CD8-positive, alpha-beta T cell (primary cell): ENCODE measurements at regions of chr3 and their contacts with region 1.

Region 1: GRCh38 chr3:50674349-50675178 is at the start of gene DOCK3:
- DNase-seq: peak; percentile 29 to 87 (median 60)
- ATAC-seq: peak; percentile 86
- H3K4me3 ChIP-seq: peak within 1 kb of the TSS; percentile 54 to 61
- H3K4me3 Mint-ChIP-seq: peak within 1 kb of the TSS; percentile 81
- H3K27ac ChIP-seq: no peak within 1 kb of the TSS
- H3K27ac Mint-ChIP-seq: no peak within 1 kb of the TSS
- H3K4me1 ChIP-seq: peaks cover 14% of the 10 kb centered on the region
- H3K4me1 Mint-ChIP-seq: peaks cover 11% of the 10 kb centered on the region
- H3K27me3 ChIP-seq: peaks cover 0 to 5% of the 10 kb centered on the region in 2 experiments
- H3K27me3 Mint-ChIP-seq: peaks cover 19% of the 10 kb centered on the region
- CTCF ChIP-seq: no peak
- total RNA-seq, gene DOCK3: 2.8 to 3.0 TPM

Region 2: DNA sequence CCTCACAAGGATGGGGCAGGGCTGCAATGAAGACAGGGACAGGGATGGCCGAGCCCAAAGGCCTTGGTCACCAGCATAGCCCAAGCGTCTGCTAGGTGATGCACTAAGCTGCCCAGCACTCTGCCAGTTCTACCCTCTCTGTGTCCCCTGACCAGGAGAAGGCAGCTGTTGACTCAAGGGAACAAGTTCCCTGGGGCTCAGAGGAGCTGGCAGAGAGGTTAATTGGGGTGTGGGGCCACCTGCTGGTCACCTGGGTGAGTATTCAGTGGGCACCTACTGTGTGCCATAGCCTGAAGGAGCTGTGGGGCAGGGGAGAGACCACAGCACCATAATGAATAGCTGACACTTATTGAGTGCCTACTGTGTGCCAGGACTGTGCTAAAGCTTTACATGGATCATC is 21.9 kb before region 1 on chr3:
- CTCF ChIA-PET with region 1: interaction called, 15 read pairs
- POLR2A ChIA-PET with region 1: no interaction called
- intact Hi-C with region 1: no loop called
- DNase-seq: peak in 8 of 9 experiments; percentile 29 to 72 (median 54)
- ATAC-seq: peak; percentile 61
- H3K4me3 ChIP-seq: no peak overlapping the region
- H3K4me3 Mint-ChIP-seq: no peak overlapping the region
- H3K27ac ChIP-seq: no peak overlapping the region
- H3K27ac Mint-ChIP-seq: peak overlapping the region; percentile 52
- H3K4me1 ChIP-seq: no peaks in the 10 kb centered on the region
- H3K4me1 Mint-ChIP-seq: peaks cover 1% of the 10 kb centered on the region
- H3K27me3 ChIP-seq: no peaks in the 10 kb centered on the region
- H3K27me3 Mint-ChIP-seq: no peaks in the 10 kb centered on the region
- CTCF ChIP-seq: peak; percentile 42

Region 3: DNA sequence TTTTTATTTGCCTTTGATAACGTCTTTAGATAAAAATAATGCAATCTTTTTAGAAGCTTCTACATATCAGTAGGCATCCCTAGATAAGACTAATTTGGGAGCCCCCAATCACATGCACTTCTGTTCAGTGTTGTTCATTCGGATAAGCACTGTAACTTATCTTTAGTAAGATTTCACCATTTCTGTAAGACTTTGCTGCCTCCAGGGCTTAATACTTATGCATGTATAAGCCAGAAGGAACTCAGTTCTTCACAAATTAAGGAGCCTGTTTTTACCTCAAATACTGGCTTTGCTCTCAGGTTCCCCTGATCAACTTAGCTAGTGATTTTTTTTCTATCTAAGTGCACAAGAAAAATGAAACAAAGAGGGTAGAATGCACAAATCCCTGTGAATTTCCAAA is 20.5 kb after region 1 on chr3:
- CTCF ChIA-PET with region 1: no interaction called
- POLR2A ChIA-PET with region 1: no interaction called
- intact Hi-C with region 1: no loop called
- DNase-seq: no peak
- ATAC-seq: no peak
- H3K4me3 ChIP-seq: no peak overlapping the region
- H3K4me3 Mint-ChIP-seq: no peak overlapping the region
- H3K27ac ChIP-seq: no peak overlapping the region
- H3K27ac Mint-ChIP-seq: no peak overlapping the region
- H3K4me1 ChIP-seq: no peaks in the 10 kb centered on the region
- H3K4me1 Mint-ChIP-seq: no peaks in the 10 kb centered on the region
- H3K27me3 ChIP-seq: no peaks in the 10 kb centered on the region
- H3K27me3 Mint-ChIP-seq: peaks cover 2% of the 10 kb centered on the region
- CTCF ChIP-seq: no peak

Region 4: GRCh38 chr3:50961386-50961785 is 286.8 kb after region 1 on chr3:
- CTCF ChIA-PET with region 1: no interaction called
- POLR2A ChIA-PET with region 1: no interaction called
- intact Hi-C with region 1: loop called in 1 of 2 experiments (anchors 10 kb)
- DNase-seq: no peak
- ATAC-seq: no peak
- H3K4me3 ChIP-seq: no peak overlapping the region
- H3K4me3 Mint-ChIP-seq: no peak overlapping the region
- H3K27ac ChIP-seq: no peak overlapping the region
- H3K27ac Mint-ChIP-seq: no peak overlapping the region
- H3K4me1 ChIP-seq: no peaks in the 10 kb centered on the region
- H3K4me1 Mint-ChIP-seq: no peaks in the 10 kb centered on the region
- H3K27me3 ChIP-seq: no peaks in the 10 kb centered on the region
- H3K27me3 Mint-ChIP-seq: peaks cover 10% of the 10 kb centered on the region
- CTCF ChIP-seq: no peak

Region 5: DNA sequence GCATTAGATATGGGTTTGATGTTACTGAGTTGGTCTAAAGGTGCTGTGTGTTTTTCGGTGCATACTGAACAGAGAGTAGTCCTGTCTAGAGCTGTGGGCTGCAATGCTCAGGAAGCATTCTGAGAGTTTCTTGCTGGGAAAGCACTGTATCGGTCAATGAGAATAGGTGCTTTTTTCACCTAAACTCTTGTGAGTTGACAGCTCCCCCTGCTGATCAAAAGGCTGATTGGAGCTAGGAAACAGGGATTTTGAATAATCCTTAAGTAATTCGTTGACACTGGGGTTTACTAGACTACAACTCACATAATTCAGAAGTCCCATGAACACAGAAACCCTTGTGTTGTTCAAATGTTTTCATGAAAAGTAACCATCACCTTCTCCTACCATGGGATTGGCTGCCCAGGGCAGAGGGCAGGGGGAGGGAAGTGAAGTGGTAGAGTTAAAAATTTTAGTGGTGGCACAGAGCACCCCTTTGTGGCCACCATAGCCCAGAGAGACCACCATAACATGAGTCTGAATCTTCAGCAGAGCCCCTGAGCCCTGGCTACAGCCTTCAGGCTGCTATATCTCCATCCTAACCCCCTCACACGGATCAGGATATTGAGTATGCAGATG is 697.5 kb after region 1 on chr3:
- CTCF ChIA-PET with region 1: interaction called, 10 read pairs
- POLR2A ChIA-PET with region 1: no interaction called
- intact Hi-C with region 1: loop called (anchors 2 to 5 kb)
- DNase-seq: peak; percentile 23 to 74 (median 51)
- ATAC-seq: peak; percentile 36
- H3K4me3 ChIP-seq: no peak overlapping the region
- H3K4me3 Mint-ChIP-seq: no peak overlapping the region
- H3K27ac ChIP-seq: no peak overlapping the region
- H3K27ac Mint-ChIP-seq: no peak overlapping the region
- H3K4me1 ChIP-seq: no peaks in the 10 kb centered on the region
- H3K4me1 Mint-ChIP-seq: peaks cover 2% of the 10 kb centered on the region
- H3K27me3 ChIP-seq: no peaks in the 10 kb centered on the region
- H3K27me3 Mint-ChIP-seq: peaks cover 2% of the 10 kb centered on the region
- CTCF ChIP-seq: peak; percentile 46